ENCODE measurements at regions of chr2 and their contacts with region 1.

Region 1: DNA sequence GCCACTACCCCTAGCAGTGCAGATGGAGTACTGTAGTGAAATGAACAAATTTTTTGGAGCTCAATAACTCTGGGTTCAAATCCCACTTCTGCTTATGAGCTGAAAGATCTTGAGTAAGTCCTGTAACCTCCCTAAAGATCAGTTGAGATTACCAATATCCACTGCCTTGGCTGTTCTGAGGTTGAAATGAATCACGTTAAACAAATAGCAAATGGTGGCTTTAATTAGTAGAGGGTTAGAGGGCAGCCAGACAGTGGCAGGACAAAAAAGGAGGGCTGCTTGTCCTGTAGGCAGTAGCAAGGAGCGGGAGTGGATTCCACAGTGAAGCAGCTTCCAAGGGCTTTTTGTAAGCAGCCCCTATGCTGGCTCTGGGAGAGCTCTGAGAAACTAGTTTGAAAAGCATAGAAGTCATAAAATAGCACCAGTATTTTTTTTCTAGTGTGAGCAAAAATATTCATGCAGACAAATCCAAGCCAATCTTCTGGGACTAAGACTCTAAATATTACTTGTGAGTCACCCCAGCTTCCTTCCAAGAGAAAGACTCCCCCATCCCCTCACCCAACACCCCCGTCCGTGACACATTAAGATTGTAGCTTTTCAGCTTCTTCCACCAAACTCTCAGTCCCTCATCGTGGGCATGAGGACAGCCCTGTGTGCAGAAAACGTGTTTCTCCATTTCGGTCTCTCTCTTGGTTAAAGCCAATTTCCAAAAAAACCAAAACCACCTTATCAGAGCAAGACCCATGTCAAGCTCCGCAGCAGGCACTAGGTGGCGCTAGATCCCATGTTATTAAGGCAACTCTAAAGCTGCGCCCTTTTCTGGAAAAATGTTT is 123.5 kb upstream of the LGALSL start:
- DNase-seq: peak; percentile 84
- ATAC-seq: no peak
- H3K4me3 Mint-ChIP-seq: peak overlapping the region; percentile 41
- H3K27ac Mint-ChIP-seq: peak overlapping the region; percentile 27
- H3K4me1 Mint-ChIP-seq: peaks cover 39% of the 10 kb centered on the region
- H3K27me3 Mint-ChIP-seq: no peaks in the 10 kb centered on the region
- CTCF ChIP-seq: peak; percentile 93

Region 2: DNA sequence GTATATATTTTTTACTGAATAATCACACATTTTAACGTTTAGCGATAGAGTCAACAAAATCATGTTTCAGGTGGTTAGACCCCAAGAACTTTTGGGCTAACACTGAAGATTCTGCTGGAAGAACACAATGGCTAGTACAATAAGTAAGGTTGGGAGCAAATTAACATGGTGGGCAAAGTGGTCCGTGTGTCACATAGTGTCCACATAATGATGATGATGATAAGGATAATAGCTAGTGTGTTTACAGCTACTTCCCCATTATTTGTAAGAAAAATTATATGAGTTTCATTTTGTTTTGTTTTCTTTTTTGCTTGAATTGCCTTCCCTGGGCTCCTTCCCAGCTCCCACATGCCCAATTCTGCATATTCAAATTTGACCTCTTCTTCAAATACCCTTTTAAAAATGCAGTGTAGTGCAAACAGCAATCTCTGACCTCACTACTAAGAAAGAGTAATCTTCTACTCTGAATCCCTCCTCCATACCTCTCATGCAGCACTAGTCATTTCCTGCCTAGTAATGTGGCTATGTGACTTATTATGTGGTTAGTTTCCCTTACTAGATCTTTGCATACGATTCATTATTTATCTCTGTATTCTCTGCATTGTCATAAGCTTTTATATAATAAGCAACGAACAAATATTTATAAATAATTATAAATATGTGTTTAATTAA is 294.3 kb before region 1 on chr2:
- CTCF ChIA-PET with region 1: interaction called, 19 read pairs
- POLR2A ChIA-PET with region 1: no interaction called
- intact Hi-C with region 1: no loop called
- DNase-seq: peak; percentile 47
- ATAC-seq: peak; percentile 93
- H3K4me3 Mint-ChIP-seq: peak overlapping the region; percentile 47
- H3K27ac Mint-ChIP-seq: peak overlapping the region; percentile 84
- H3K4me1 Mint-ChIP-seq: peaks cover 44% of the 10 kb centered on the region
- H3K27me3 Mint-ChIP-seq: no peaks in the 10 kb centered on the region
- CTCF ChIP-seq: no peak

Region 3: DNA sequence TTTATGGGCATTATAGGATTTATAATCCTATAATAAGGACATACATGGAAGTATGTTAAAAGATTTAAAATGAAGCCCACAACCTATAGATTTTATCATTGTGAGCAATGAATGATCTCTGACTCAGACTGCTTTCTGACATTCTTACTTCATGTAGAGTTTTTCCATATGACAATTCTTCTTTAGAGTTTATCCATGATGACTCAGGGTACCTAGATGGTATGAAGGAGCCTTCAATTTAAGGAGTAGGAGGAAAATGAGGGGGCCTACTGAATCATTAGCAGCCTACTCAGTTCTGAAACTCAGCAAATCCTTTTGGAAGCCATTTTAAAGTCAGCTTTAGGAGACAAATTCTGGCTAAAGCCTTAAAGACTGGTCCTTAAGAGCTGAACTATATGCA is 196.7 kb before region 1 on chr2:
- CTCF ChIA-PET with region 1: interaction called, 36 read pairs
- POLR2A ChIA-PET with region 1: interaction called, 6 read pairs
- intact Hi-C with region 1: no loop called
- DNase-seq: no peak
- ATAC-seq: peak; percentile 66
- H3K4me3 Mint-ChIP-seq: no peak overlapping the region
- H3K27ac Mint-ChIP-seq: peak overlapping the region; percentile 88
- H3K4me1 Mint-ChIP-seq: peaks cover 82% of the 10 kb centered on the region
- H3K27me3 Mint-ChIP-seq: no peaks in the 10 kb centered on the region
- CTCF ChIP-seq: no peak

Region 4: DNA sequence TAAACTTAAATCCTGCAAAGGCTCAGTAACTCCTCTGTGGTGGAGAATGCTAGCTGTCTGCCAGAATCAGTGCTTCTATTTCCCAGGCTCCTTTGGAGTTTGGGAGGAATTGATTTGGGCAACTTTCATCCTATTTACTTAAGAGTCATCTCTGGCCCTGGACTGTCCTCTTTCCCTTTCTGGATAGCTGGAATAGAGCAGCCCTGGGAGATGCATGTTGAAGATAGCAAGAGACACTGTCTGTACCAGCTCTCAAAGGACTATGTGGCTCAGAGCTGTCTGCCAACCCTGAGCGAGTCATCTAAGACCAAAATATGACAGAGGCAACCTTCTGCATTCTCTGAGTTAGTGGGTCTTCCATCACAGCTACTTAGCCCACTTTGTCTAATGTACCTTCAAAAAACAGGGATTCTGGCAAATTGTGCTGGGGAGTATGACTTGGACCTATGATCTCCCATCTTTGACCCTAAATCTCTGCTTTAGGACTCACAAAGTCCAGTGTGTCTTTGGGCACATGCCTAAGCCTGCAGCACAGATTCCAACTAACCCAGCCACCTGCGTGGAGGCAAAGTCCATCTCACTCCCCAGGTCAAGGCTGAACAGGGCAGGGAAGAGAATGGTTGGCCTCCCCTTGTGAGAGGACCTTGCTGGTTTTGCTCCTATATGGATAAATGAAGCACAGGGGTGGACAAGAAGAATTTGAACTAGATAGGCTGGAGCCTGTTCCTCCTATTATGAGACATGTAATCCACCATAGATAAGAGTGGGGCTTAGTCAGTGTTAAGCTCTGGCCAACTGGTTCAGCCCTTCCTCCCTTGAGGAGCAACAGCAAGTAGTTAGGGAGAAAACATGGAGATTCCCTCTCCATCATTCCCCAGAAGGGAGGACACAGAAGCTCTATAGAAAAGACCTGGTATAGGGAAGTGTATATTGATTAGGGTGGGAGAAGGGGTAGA is 87.1 kb before region 1 on chr2:
- CTCF ChIA-PET with region 1: interaction called, 12 read pairs
- POLR2A ChIA-PET with region 1: no interaction called
- intact Hi-C with region 1: no loop called
- DNase-seq: no peak
- ATAC-seq: no peak
- H3K4me3 Mint-ChIP-seq: no peak overlapping the region
- H3K27ac Mint-ChIP-seq: no peak overlapping the region
- H3K4me1 Mint-ChIP-seq: no peaks in the 10 kb centered on the region
- H3K27me3 Mint-ChIP-seq: no peaks in the 10 kb centered on the region
- CTCF ChIP-seq: no peak

Region 5: GRCh38 chr2:64371727-64372126 is 41.2 kb after region 1 on chr2:
- CTCF ChIA-PET with region 1: interaction called, 12 read pairs
- POLR2A ChIA-PET with region 1: no interaction called
- intact Hi-C with region 1: no loop called
- DNase-seq: no peak
- ATAC-seq: no peak
- H3K4me3 Mint-ChIP-seq: no peak overlapping the region
- H3K27ac Mint-ChIP-seq: no peak overlapping the region
- H3K4me1 Mint-ChIP-seq: no peaks in the 10 kb centered on the region
- H3K27me3 Mint-ChIP-seq: no peaks in the 10 kb centered on the region
- CTCF ChIP-seq: no peak

Region 6: GRCh38 chr2:64504774-64505720 is 174.6 kb after region 1 on chr2:
- CTCF ChIA-PET with region 1: interaction called, 12 read pairs
- POLR2A ChIA-PET with region 1: interaction called, 3 read pairs
- intact Hi-C with region 1: no loop called
- DNase-seq: no peak
- ATAC-seq: no peak
- H3K4me3 Mint-ChIP-seq: no peak overlapping the region
- H3K27ac Mint-ChIP-seq: no peak overlapping the region
- H3K4me1 Mint-ChIP-seq: no peaks in the 10 kb centered on the region
- H3K27me3 Mint-ChIP-seq: no peaks in the 10 kb centered on the region
- CTCF ChIP-seq: no peak

Region 7: DNA sequence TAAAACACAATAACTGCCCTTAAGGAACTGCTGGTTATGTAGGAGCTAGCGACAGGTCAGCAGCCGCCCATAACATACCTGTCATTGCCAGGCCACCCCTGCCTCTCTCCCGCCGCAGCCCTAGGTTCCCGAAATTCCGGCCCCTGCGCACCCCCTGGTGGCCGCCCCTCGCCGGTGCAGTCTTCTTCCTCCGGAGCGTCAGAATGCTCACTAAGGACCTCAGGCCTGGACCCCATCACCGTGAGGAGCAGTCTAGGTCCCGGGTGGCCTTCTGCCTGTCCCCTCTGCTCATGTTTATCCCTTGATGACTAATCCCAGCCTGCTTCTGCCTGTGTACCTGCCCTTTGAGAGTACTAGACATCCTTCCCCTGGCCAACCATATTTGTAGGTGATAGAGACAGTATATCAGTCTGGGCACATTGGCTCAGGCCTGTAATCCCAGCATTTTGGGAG is 543.0 kb after region 1 on chr2:
- CTCF ChIA-PET with region 1: interaction called, 7 read pairs
- POLR2A ChIA-PET with region 1: interaction called, 4 read pairs
- intact Hi-C with region 1: loop called (anchors 10 kb)
- DNase-seq: peak; percentile 87
- ATAC-seq: peak; percentile 92
- H3K4me3 Mint-ChIP-seq: peak overlapping the region; percentile 36
- H3K27ac Mint-ChIP-seq: no peak overlapping the region
- H3K4me1 Mint-ChIP-seq: peaks cover 6% of the 10 kb centered on the region
- H3K27me3 Mint-ChIP-seq: peaks cover 1% of the 10 kb centered on the region
- CTCF ChIP-seq: peak; percentile 89

Region 8: DNA sequence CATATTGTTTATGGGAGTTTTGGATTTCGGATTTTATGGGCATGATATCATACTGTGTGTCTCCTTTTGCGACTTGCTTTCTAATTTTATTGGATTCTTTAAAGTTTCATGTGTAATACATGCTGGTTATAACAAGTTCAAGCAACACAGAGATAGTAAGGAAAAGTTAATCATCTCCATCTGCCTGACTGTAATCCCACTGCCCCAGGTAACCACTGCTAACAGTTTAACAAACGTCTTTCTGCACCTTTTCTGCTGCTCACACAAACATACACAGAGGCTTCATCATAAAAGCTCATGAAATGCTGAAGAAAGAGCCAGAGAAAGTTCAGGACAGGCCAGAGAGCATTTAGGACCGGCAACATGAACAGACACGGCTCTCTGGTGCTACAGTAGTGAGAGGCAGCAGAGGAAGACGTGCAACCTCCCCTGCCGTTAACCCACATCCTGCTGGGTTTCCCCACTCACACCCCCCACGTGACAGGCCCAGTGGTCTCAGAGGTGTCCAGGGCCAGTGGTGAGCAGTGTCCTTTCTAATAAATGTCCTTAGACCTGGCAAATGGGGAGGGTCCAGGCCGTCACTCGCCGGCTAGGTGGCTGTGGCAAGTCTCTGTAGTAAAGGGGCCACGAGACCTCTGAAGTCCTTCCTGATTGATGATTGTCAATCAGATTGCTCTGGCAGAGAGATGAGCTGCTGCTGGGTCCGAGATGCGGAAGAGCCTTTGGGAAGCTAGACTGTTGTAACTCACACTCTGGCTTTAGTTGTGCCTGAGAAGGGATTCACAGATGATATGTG is 615.7 kb after region 1 on chr2:
- CTCF ChIA-PET with region 1: no interaction called
- POLR2A ChIA-PET with region 1: no interaction called
- intact Hi-C with region 1: no loop called
- DNase-seq: peak; percentile 86
- ATAC-seq: peak; percentile 97
- H3K4me3 Mint-ChIP-seq: peak overlapping the region; percentile 70
- H3K27ac Mint-ChIP-seq: peak overlapping the region; percentile 92
- H3K4me1 Mint-ChIP-seq: peaks cover 29% of the 10 kb centered on the region
- H3K27me3 Mint-ChIP-seq: no peaks in the 10 kb centered on the region
- CTCF ChIP-seq: no peak